ENCODE measurements at regions of chr11 and their contacts with region 1.

Region 1: GRCh38 chr11:114026355-114026754 is 33.2 kb upstream of the ZBTB16 start:
- DNase-seq: peak in 1 of 2 experiments; percentile 10
- H3K4me3 ChIP-seq: no peak overlapping the region
- H3K27ac ChIP-seq: no peak overlapping the region
- H3K4me1 ChIP-seq: no peaks in the 10 kb centered on the region
- H3K27me3 ChIP-seq: peaks cover 0 to 2% (median 0%) of the 10 kb centered on the region in 4 experiments; a peak in 1 of 7 replicates
- CTCF ChIP-seq: peak in 2 of 3 experiments; percentile 48 to 68; a peak in 3 of 4 replicates
- EP300 ChIP-seq: no peak
- POLR2A ChIP-seq: no peak
- RAD21 ChIP-seq: peak; percentile 29 to 45; a peak in 3 of 4 replicates

Region 2: GRCh38 chr11:114001416-114001815 is 24.9 kb before region 1 on chr11:
- CTCF ChIA-PET with region 1: interaction called, 10 read pairs
- POLR2A ChIA-PET with region 1: no interaction called
- DNase-seq: no peak
- H3K4me3 ChIP-seq: no peak overlapping the region
- H3K27ac ChIP-seq: no peak overlapping the region
- H3K4me1 ChIP-seq: peaks cover 0 to 5% (median 1%) of the 10 kb centered on the region in 4 experiments; a peak in 5 of 7 replicates
- H3K27me3 ChIP-seq: no peaks in the 10 kb centered on the region
- CTCF ChIP-seq: no peak
- EP300 ChIP-seq: no peak
- POLR2A ChIP-seq: no peak
- RAD21 ChIP-seq: no peak

Region 3: DNA sequence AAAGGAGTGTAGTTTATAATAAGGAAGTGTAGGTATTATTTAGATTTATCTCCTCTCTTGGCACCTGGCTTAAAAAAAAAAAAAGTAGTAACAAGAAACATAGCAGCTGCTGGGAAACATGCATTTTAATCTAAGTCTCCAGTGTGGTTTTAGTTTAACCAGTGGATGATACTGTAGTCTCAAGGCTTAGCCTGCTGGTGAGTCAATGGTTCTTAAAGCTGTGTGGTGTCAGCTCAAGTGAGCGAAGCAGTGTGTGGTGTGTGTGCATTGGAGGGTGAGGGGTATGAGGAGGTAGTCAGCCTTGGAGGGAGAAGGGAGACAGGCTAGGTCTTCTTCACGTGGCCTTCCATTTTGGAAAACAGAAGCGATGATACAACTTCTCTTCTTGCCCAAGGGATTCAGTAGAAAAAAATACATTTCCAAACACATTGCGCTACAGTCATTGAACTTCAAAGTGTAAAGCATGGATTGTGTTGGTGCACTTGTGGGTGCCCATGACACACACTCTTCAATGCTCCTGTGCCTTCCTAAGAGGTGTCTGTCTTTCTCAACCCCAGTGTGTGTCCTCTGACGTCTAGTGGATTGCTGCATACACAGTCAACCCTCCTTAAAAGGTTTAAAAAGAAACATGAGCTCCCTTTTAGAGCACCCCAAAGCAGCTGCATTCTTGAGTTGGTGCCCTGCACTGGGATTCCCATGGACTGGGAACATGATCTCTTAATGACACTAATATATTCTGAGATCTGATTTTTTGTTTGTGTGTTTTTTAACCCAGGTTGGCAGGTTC is 73.2 kb after region 1 on chr11:
- CTCF ChIA-PET with region 1: no interaction called
- POLR2A ChIA-PET with region 1: no interaction called
- DNase-seq: no peak
- H3K4me3 ChIP-seq: no peak overlapping the region
- H3K27ac ChIP-seq: no peak overlapping the region
- H3K4me1 ChIP-seq: no peaks in the 10 kb centered on the region
- H3K27me3 ChIP-seq: no peaks in the 10 kb centered on the region
- CTCF ChIP-seq: no peak
- EP300 ChIP-seq: no peak
- POLR2A ChIP-seq: no peak
- RAD21 ChIP-seq: no peak

Region 4: DNA sequence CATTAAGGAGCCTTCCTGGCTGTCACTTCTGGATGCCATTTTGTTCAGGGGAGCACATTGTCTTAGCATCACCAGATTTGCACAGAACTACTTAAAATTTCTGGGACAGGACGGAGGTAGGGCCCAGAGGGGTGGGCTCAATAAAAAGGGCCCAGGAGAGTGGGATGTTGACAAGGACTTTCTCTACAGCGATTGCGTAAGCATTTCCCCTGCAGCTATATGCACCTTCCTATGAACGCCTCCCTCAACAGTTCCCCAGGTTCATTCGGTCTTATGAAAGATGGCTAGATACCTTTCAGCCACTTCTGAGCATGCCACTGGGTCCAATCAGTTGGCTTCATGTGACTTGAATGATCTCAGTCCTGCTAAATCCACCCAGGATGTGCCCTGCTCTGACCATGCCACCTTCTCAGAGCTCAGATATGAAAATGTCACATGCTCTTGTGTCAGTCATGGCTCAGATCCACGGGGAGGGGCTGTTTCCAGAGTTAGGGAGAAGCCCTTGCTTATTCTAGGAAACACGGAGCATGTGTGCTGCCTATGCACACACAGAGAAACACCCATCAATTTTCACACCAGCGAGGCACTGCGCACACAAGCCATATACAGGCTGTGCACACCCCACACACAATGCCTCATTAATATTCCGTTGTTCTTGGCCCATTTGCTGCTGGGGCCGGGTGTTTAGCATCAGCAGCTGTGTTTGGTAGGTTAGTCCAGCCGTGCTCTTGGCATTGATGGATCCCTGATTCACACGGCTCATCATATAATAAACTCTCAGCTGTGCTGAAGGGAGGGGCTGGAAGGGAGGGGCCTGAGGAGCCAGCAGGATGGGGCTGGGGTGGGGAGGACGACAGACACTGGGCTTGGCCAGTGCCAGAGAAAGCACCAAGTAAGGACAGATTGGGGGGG is 217.4 kb after region 1 on chr11:
- CTCF ChIA-PET with region 1: interaction called, 13 read pairs
- POLR2A ChIA-PET with region 1: no interaction called
- DNase-seq: no peak
- H3K4me3 ChIP-seq: no peak overlapping the region
- H3K27ac ChIP-seq: no peak overlapping the region
- H3K4me1 ChIP-seq: peaks cover 0 to 2% (median 0%) of the 10 kb centered on the region in 4 experiments; a peak in 2 of 7 replicates
- H3K27me3 ChIP-seq: no peaks in the 10 kb centered on the region
- CTCF ChIP-seq: no peak
- EP300 ChIP-seq: no peak
- POLR2A ChIP-seq: no peak
- RAD21 ChIP-seq: no peak